ENCODE measurements at regions of chr3 and their contacts with region 1.

Region 1: GRCh38 chr3:153161138-153161713 is 800 bp upstream of the RAP2B start:
- DNase-seq: peak; percentile 77 to 98 (median 85)
- ATAC-seq: peak; percentile 82
- H3K4me3 ChIP-seq: peak overlapping the region; percentile 94
- H3K4me3 Mint-ChIP-seq: peak overlapping the region; percentile 100
- H3K27ac ChIP-seq: peak overlapping the region; percentile 66 to 76
- H3K27ac Mint-ChIP-seq: peak overlapping the region; percentile 95
- H3K4me1 ChIP-seq: peaks cover 18% of the 10 kb centered on the region
- H3K4me1 Mint-ChIP-seq: peaks cover 50% of the 10 kb centered on the region
- H3K27me3 ChIP-seq: no peaks in the 10 kb centered on the region
- H3K27me3 Mint-ChIP-seq: no peaks in the 10 kb centered on the region
- CTCF ChIP-seq: no peak

Region 2: DNA sequence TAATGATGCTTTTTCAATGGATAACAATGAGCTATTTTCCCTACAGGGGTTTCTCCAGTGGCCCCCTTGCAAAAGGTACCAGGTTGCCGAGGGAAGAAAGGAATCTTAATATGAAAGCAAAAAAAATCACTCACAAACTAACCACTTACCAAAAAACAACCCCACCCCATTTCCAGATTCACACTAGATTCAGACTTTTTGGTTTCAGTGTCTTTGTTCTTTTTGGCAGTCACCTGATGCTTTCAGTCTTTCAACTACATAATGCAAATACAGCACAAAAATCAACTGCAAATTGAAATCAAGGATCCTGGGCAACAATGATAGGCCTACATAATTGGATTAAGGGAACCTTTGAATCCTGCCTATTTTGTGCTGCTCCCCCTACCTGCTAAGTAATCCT is 70.3 kb before region 1 on chr3:
- CTCF ChIA-PET with region 1: no interaction called
- POLR2A ChIA-PET with region 1: interaction called, 6 read pairs
- intact Hi-C with region 1: loop called in 1 of 2 experiments (anchors 5 kb)
- DNase-seq: peak in 3 of 14 experiments; percentile 28 to 55 (median 33)
- ATAC-seq: peak; percentile 65
- H3K4me3 ChIP-seq: no peak overlapping the region
- H3K4me3 Mint-ChIP-seq: peak overlapping the region; percentile 13
- H3K27ac ChIP-seq: no peak overlapping the region
- H3K27ac Mint-ChIP-seq: peak overlapping the region; percentile 64
- H3K4me1 ChIP-seq: peaks cover 8% of the 10 kb centered on the region
- H3K4me1 Mint-ChIP-seq: peaks cover 25% of the 10 kb centered on the region
- H3K27me3 ChIP-seq: no peaks in the 10 kb centered on the region
- H3K27me3 Mint-ChIP-seq: no peaks in the 10 kb centered on the region
- CTCF ChIP-seq: no peak

Region 3: GRCh38 chr3:153221748-153222162 is 60.5 kb after region 1 on chr3:
- CTCF ChIA-PET with region 1: interaction called, 14 read pairs
- POLR2A ChIA-PET with region 1: interaction called, 101 read pairs
- intact Hi-C with region 1: loop called (anchors 1 to 5 kb)
- DNase-seq: peak; percentile 63 to 95 (median 75)
- ATAC-seq: peak; percentile 92
- H3K4me3 ChIP-seq: peak overlapping the region; percentile 10
- H3K4me3 Mint-ChIP-seq: peak overlapping the region; percentile 72
- H3K27ac ChIP-seq: peak overlapping the region; percentile 78 to 84
- H3K27ac Mint-ChIP-seq: peak overlapping the region; percentile 91
- H3K4me1 ChIP-seq: peaks cover 53% of the 10 kb centered on the region
- H3K4me1 Mint-ChIP-seq: peaks cover 68% of the 10 kb centered on the region
- H3K27me3 ChIP-seq: no peaks in the 10 kb centered on the region
- H3K27me3 Mint-ChIP-seq: no peaks in the 10 kb centered on the region
- CTCF ChIP-seq: no peak

Region 4: DNA sequence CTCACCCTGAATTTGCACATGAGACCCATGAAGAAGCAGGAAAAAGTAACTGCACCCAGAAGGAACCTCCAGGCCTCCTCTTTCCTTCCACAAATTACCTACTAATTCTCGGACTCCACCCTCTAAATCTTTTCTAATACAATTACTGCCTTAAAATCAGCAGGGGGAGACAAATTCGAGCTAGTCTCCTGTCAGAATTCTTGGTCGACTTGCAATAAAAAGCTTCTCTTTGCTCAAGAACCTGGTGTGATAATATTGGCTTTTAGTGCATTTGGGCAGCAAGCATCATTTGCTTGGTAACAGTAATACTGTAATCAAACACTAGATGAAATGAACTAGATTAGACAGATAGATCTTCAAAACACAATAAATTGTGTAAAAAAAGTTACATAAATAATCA is 282.7 kb after region 1 on chr3:
- CTCF ChIA-PET with region 1: no interaction called
- POLR2A ChIA-PET with region 1: no interaction called
- intact Hi-C with region 1: loop called in 1 of 2 experiments (anchors 10 kb)
- DNase-seq: peak in 3 of 14 experiments; percentile 14 to 28 (median 18)
- ATAC-seq: no peak
- H3K4me3 ChIP-seq: no peak overlapping the region
- H3K4me3 Mint-ChIP-seq: no peak overlapping the region
- H3K27ac ChIP-seq: no peak overlapping the region
- H3K27ac Mint-ChIP-seq: no peak overlapping the region
- H3K4me1 ChIP-seq: no peaks in the 10 kb centered on the region
- H3K4me1 Mint-ChIP-seq: peaks cover 23% of the 10 kb centered on the region
- H3K27me3 ChIP-seq: no peaks in the 10 kb centered on the region
- H3K27me3 Mint-ChIP-seq: no peaks in the 10 kb centered on the region
- CTCF ChIP-seq: peak; percentile 23

Region 5: GRCh38 chr3:153595186-153595815 is 434.1 kb after region 1 on chr3:
- CTCF ChIA-PET with region 1: no interaction called
- POLR2A ChIA-PET with region 1: interaction called, 3 read pairs
- intact Hi-C with region 1: loop called (anchors 5 to 10 kb)
- DNase-seq: peak in 3 of 14 experiments; percentile 35 to 40 (median 38)
- ATAC-seq: no peak
- H3K4me3 ChIP-seq: no peak overlapping the region
- H3K4me3 Mint-ChIP-seq: no peak overlapping the region
- H3K27ac ChIP-seq: no peak overlapping the region
- H3K27ac Mint-ChIP-seq: no peak overlapping the region
- H3K4me1 ChIP-seq: no peaks in the 10 kb centered on the region
- H3K4me1 Mint-ChIP-seq: peaks cover 10% of the 10 kb centered on the region
- H3K27me3 ChIP-seq: no peaks in the 10 kb centered on the region
- H3K27me3 Mint-ChIP-seq: no peaks in the 10 kb centered on the region
- CTCF ChIP-seq: peak; percentile 65

Region 6: DNA sequence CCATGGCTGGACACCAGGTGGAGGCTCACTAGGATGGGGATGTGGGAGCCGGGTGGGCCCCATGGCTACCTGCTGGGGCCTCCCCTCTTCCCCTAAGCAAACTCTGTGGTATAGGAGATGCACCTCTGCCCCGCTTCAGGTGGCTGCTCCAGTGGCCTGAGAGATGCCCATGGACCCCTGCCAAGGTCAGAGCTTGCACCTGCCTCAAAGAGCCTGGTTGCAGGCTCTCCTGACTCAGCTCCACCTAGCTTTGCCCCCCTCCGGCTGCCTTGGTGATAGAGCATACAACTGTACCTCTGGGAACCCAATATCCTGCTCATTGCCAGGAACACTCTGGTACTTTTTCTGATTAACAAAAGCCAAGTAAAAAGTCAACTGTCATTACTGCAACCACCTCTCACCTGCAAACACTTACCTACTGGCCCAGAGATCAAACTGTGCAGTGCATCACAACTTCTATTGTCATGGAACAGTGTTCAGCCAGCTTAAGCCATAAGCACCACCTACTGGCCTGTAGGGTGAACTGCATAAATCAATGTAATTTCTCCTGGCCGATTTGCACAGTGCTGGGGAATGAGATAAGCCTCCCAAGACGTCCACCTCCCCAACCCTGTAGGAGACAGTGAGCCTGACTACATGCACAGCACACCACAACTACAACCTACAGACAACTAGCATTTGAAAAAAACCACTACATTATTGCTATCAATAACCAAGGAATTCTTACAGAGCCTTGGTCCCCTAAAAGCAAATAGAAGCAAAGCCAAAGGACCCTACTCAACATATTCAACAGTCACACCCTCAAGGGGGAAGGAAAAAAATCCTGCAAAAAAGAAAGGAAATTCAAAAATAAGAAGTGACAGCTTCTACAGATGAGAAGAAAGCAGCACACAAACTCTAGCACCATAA is 607.6 kb after region 1 on chr3:
- CTCF ChIA-PET with region 1: interaction called, 5 read pairs
- POLR2A ChIA-PET with region 1: no interaction called
- intact Hi-C with region 1: loop called (anchors 1 to 2 kb)
- DNase-seq: peak; percentile 9 to 77 (median 34)
- ATAC-seq: peak; percentile 98
- H3K4me3 ChIP-seq: no peak overlapping the region
- H3K4me3 Mint-ChIP-seq: no peak overlapping the region
- H3K27ac ChIP-seq: no peak overlapping the region
- H3K27ac Mint-ChIP-seq: no peak overlapping the region
- H3K4me1 ChIP-seq: peaks cover 5% of the 10 kb centered on the region
- H3K4me1 Mint-ChIP-seq: no peaks in the 10 kb centered on the region
- H3K27me3 ChIP-seq: no peaks in the 10 kb centered on the region
- H3K27me3 Mint-ChIP-seq: peaks cover 9% of the 10 kb centered on the region
- CTCF ChIP-seq: peak; percentile 89

Measured in CD4-positive, alpha-beta T cell (primary cell).